H1 (cell line): ENCODE measurements at regions of chr3 and their contacts with region 1.

Region 1: DNA sequence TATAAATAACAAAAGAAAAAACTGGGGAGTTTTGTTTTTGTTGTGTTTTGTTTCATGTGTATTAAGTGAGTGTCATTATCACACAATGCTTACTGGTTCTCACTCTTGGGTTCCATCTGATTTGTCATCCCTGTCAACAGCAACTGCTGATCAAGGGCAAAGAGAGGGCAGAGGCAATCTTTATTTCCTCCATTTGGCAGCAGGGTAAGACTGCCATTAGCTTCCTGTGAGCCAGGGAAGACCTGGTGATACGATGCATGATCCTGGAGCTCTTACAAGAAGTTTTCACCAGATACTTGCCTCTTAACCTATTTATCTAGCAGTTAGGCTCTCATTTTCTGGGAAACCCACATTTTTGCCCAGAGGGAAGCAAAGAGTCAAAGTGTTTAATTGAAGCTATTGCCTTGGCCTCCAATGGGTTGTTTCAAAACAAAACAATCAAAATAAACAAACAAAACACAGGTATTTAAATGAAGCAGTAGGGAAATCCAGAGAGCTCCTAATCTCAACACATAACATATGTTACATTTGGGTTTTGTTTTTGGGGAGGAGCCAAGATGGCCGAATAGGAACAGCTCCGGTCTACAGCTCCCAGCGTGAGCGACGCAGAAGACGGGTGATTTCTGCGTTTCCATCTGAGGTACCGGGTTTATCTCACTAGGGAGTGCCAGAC is 529.8 kb downstream of the MAGI1 start:
- DNase-seq: no peak
- H3K4me3 ChIP-seq: peak overlapping the region; percentile 44 to 66 (median 51)
- H3K27ac ChIP-seq: peak overlapping the region; percentile 73
- H3K4me1 ChIP-seq: peaks cover 0 to 7% (median 4%) of the 10 kb centered on the region in 4 experiments; a peak in 3 of 7 replicates
- H3K27me3 ChIP-seq: no peaks in the 10 kb centered on the region
- CTCF ChIP-seq: no peak
- EP300 ChIP-seq: no peak
- POLR2A ChIP-seq: no peak
- RAD21 ChIP-seq: no peak

Region 2: GRCh38 chr3:65497846-65498245 is 11.0 kb before region 1 on chr3:
- CTCF ChIA-PET with region 1: interaction called, 4 read pairs
- POLR2A ChIA-PET with region 1: interaction called, 10 read pairs
- DNase-seq: no peak
- H3K4me3 ChIP-seq: no peak overlapping the region
- H3K27ac ChIP-seq: no peak overlapping the region
- H3K4me1 ChIP-seq: peaks cover 0 to 12% (median 3%) of the 10 kb centered on the region in 4 experiments; a peak in 2 of 7 replicates
- H3K27me3 ChIP-seq: no peaks in the 10 kb centered on the region
- CTCF ChIP-seq: no peak
- EP300 ChIP-seq: no peak
- POLR2A ChIP-seq: no peak
- RAD21 ChIP-seq: no peak

Region 3: GRCh38 chr3:65539616-65540015 is 30.7 kb after region 1 on chr3:
- CTCF ChIA-PET with region 1: no interaction called
- POLR2A ChIA-PET with region 1: interaction called, 11 read pairs
- DNase-seq: no peak
- H3K4me3 ChIP-seq: peak overlapping the region in 2 of 4 experiments; percentile 16 to 30; a peak in 2 of 8 replicates
- H3K27ac ChIP-seq: 0 out of 2 replicates have a peak overlapping the region, but pooled peaks have one; percentile 25
- H3K4me1 ChIP-seq: peaks cover 8 to 23% (median 15%) of the 10 kb centered on the region in 4 experiments
- H3K27me3 ChIP-seq: peaks cover 0 to 6% (median 0%) of the 10 kb centered on the region in 4 experiments; a peak in 1 of 7 replicates
- CTCF ChIP-seq: no peak
- EP300 ChIP-seq: no peak; a peak in 1 of 3 replicates
- POLR2A ChIP-seq: peak in 1 of 2 experiments; percentile 33; a peak in 1 of 3 replicates
- RAD21 ChIP-seq: peak; percentile 9 to 19; a peak in 2 of 4 replicates

Region 4: GRCh38 chr3:65575373-65575840 is 66.5 kb after region 1 on chr3:
- CTCF ChIA-PET with region 1: no interaction called
- POLR2A ChIA-PET with region 1: no interaction called
- DNase-seq: no peak
- H3K4me3 ChIP-seq: no peak overlapping the region
- H3K27ac ChIP-seq: no peak overlapping the region
- H3K4me1 ChIP-seq: no peaks in the 10 kb centered on the region; a peak in 1 of 7 replicates
- H3K27me3 ChIP-seq: no peaks in the 10 kb centered on the region
- CTCF ChIP-seq: no peak
- EP300 ChIP-seq: no peak
- POLR2A ChIP-seq: no peak
- RAD21 ChIP-seq: no peak